ENCODE measurements at regions of chr12 and their contacts with region 1.

Region 1: DNA sequence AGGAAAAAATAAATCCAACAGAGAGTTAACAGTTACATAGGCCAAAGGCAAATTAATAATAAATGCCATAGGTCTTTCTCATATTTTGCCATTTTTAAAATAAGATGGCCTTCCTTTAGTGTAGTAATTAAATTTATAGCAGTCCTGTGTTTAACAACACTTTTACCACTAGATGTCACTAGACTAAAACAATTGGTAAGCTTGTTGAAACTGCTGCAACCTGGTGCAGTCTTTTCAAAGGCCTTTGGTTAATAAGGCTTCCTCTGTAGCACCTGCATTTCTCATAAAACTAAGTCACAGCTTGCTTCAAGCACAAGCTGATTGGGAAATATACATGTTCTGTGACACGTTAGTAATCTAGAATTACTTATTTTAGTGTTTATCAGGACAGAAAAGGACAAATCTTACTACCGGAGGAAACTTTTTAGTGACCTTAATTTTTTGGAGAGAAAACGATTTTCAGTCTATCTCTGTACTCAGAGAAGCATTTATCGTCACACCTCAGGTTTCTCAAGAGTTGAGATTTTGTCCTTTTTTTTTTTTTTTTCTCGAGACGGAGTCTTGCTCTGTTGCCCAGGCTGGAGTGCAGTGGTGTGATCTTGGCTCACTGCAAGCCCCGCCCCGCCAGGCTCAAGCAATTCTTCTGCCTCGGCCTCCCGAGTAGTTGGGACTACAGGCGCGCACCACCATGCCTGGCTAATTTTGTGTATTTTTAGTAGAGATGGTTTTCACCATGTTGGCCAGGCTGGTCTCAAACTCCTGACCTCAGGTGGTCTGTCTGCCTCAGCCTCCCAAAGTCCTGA is 20.0 kb downstream of the BORCS5 start:
- DNase-seq: peak; percentile 19 to 21
- H3K4me3 ChIP-seq: no peak overlapping the region
- H3K27ac ChIP-seq: no peak overlapping the region
- H3K4me1 ChIP-seq: peaks cover 0 to 6% of the 10 kb centered on the region in 2 donors
- H3K27me3 ChIP-seq: no peaks in the 10 kb centered on the region
- CTCF ChIP-seq: peak; percentile 39 to 94 (median 68)
- POLR2A ChIP-seq: no peak

Region 2: GRCh38 chr12:12425616-12426015 is 48.8 kb after region 1 on chr12:
- intact Hi-C with region 1: no loop called
- DNase-seq: no peak
- H3K4me3 ChIP-seq: no peak overlapping the region
- H3K27ac ChIP-seq: no peak overlapping the region
- H3K4me1 ChIP-seq: peaks cover 9% of the 10 kb centered on the region in 2 donors
- H3K27me3 ChIP-seq: no peaks in the 10 kb centered on the region
- CTCF ChIP-seq: no peak
- POLR2A ChIP-seq: no peak

Region 3: DNA sequence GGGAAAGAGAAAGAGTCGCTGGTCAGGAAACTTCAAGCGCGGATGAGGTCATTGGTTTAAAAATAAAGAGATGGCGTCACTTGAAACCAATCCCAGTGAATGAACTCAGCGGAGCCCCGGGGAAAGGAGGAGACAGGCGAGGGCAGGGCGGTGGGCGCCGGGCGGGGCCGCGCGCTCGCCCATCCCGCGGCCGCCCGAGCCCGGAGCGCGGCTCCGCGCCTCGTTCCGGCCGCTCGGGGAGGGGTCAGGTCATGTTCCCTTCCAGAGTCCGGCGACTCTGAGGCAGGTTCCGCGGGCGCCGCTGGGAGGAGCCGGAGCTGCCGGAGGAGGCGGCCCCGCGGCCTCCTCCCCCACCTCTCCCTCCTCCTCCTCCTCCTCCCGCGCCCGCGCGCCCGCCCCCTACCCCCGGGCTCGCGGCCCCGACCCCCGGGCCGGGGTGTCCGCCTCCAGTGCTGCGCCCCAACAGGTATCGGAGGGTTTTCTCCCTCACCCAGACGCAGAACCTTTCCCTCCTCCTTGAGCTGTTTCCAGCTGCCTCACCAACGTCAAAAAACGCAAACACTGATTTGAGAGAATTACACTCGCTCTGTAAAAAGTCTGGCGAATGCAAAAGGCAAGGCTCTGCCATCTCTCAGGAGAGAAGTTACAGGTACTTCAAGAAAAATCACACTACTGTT is 185.9 kb after region 1 on chr12 and contains the start of gene DUSP16:
- intact Hi-C with region 1: loop called (anchors 5 kb)
- DNase-seq: peak; percentile 93
- H3K4me3 ChIP-seq: peak within 1 kb of the TSS; percentile 46 to 84 (median 54)
- H3K27ac ChIP-seq: peak within 1 kb of the TSS; percentile 97 to 100 (median 100)
- H3K4me1 ChIP-seq: peaks cover 10 to 25% of the 10 kb centered on the region in 2 donors
- H3K27me3 ChIP-seq: no peaks in the 10 kb centered on the region
- CTCF ChIP-seq: peak in 2 of 6 experiments; percentile 14 to 29
- POLR2A ChIP-seq: peak in 1 of 2 donors; percentile 97
- total RNA-seq, gene DUSP16: 24.2 to 34.5 (median 26.4) TPM

Region 4: GRCh38 chr12:12654691-12655460 is 278.0 kb after region 1 on chr12:
- intact Hi-C with region 1: loop called (anchors 5 kb)
- DNase-seq: no peak
- H3K4me3 ChIP-seq: no peak overlapping the region
- H3K27ac ChIP-seq: no peak overlapping the region
- H3K4me1 ChIP-seq: peaks cover 0 to 4% of the 10 kb centered on the region in 2 donors
- H3K27me3 ChIP-seq: no peaks in the 10 kb centered on the region
- CTCF ChIP-seq: no peak
- POLR2A ChIP-seq: no peak

Region 5: GRCh38 chr12:12704593-12705230 is 327.9 kb after region 1 on chr12:
- intact Hi-C with region 1: loop called (anchors 5 kb)
- DNase-seq: peak; percentile 69 to 70
- H3K4me3 ChIP-seq: no peak overlapping the region
- H3K27ac ChIP-seq: peak overlapping the region in 2 of 3 donors; percentile 35 to 59
- H3K4me1 ChIP-seq: peaks cover 3 to 6% of the 10 kb centered on the region in 2 donors
- H3K27me3 ChIP-seq: no peaks in the 10 kb centered on the region
- CTCF ChIP-seq: peak; percentile 90 to 100 (median 98)
- POLR2A ChIP-seq: no peak